Breast epithelium (tissue), 4 donors: ENCODE measurements at regions of chr11 and their contacts with region 1.

Region 1: DNA sequence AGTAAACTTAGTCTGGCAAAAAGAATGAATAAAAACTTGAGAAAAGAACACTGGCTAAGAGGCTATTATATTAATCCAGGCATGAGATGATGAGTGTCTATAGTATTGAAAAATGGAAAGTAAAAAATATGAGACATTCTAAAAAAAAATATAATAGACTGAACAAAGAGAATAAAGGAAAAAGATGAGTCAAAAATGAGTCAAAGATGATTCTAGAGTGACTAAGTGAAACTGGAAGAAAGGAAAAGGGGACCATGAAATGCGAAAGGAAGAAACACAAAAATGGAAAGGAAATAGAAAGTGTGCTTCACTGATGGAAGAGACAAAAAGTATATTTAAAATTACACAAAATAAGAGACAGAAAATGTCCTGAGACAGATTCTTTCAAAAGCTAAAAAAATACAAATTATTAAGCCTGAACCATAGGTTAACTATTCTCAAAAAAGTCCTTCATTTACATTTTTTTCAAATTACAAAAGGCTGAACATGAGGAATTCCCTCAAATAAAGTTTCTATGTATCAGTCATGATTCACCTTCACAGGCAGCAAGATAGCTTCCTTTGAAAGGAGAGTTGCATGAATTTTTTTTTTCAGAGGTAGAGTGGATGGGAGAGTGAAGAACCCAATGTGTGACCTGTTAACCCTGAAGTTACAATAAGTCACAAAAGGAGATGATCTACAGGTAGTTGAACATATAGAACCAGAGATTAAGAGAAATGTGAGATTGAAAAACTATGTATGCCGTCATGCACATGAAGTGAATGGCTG is 75.2 kb downstream of the EIF3M start:
- DNase-seq: no peak
- H3K4me3 ChIP-seq: no peak overlapping the region
- H3K27ac ChIP-seq: no peak overlapping the region
- H3K4me1 ChIP-seq: no peaks in the 10 kb centered on the region
- H3K27me3 ChIP-seq: no peaks in the 10 kb centered on the region
- CTCF ChIP-seq: no peak
- POLR2A ChIP-seq: no peak

Region 2: DNA sequence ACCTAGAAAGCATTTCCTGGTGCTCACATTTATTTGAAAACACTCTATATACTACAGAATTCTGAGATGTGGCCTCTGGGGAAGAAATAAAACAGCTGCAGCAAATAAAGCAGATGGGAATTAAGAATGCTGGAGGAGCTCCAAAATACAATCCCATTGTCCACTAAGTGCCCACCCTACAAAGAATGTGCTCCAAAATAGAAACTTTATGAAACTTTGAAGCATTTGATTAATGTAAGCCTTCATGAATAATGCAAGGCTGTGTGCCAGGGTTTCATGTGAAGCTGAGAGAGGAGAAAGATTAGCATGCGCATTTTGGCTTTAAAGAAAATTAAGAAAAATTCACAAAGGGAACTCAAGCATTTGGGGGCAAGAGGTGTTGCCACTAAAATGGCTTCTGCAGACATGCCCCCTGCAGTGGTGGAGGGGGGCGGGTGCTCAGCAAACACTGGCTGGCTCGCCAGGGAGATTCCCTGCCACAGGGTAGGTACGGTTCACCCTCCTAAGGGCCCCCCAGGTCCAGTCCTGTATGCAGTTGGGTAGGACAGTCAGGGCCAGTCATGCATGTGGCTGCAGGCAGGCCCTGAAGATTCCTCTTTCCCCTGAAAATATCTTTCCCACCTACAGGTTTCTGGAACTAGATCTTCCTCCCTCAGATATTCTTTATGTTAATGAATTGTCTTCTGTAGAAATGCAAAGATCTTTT is 614.5 kb before region 1 on chr11:
- intact Hi-C with region 1: no loop called
- DNase-seq: no peak
- H3K4me3 ChIP-seq: no peak overlapping the region
- H3K27ac ChIP-seq: no peak overlapping the region
- H3K4me1 ChIP-seq: no peaks in the 10 kb centered on the region
- H3K27me3 ChIP-seq: no peaks in the 10 kb centered on the region
- CTCF ChIP-seq: no peak
- POLR2A ChIP-seq: no peak

Region 3: GRCh38 chr11:32671051-32671450 is 12.2 kb after region 1 on chr11:
- intact Hi-C with region 1: loop called (anchors 1 kb)
- DNase-seq: no peak
- H3K4me3 ChIP-seq: no peak overlapping the region
- H3K27ac ChIP-seq: no peak overlapping the region
- H3K4me1 ChIP-seq: no peaks in the 10 kb centered on the region
- H3K27me3 ChIP-seq: no peaks in the 10 kb centered on the region
- CTCF ChIP-seq: no peak
- POLR2A ChIP-seq: no peak